ENCODE measurements at regions of chr4 and their contacts with region 1.

Region 1: GRCh38 chr4:105551965-105552746 is at the start of gene ARHGEF38:
- DNase-seq: peak; percentile 89
- ATAC-seq: peak; percentile 84
- H3K4me3 ChIP-seq: peak within 1 kb of the TSS; percentile 58
- H3K27ac ChIP-seq: peak within 1 kb of the TSS; percentile 99
- H3K4me1 ChIP-seq: peaks cover 52% of the 10 kb centered on the region
- H3K27me3 ChIP-seq: no peaks in the 10 kb centered on the region
- CTCF ChIP-seq: no peak
- total RNA-seq, gene ARHGEF38: 2.0 and 5.9 TPM in 2 replicates

Region 2: GRCh38 chr4:105509291-105509690 is 42.9 kb before region 1 on chr4:
- CTCF ChIA-PET with region 1: no interaction called
- POLR2A ChIA-PET with region 1: no interaction called
- intact Hi-C with region 1: loop called (anchors 5 kb)
- DNase-seq: no peak
- ATAC-seq: peak; percentile 15; the same call in 1 of the 2 replicates
- H3K4me3 ChIP-seq: no peak overlapping the region
- H3K27ac ChIP-seq: no peak overlapping the region
- H3K4me1 ChIP-seq: no peaks in the 10 kb centered on the region
- H3K27me3 ChIP-seq: no peaks in the 10 kb centered on the region
- CTCF ChIP-seq: no peak

Region 3: GRCh38 chr4:105520817-105521790 is 31.1 kb before region 1 on chr4:
- CTCF ChIA-PET with region 1: no interaction called
- POLR2A ChIA-PET with region 1: no interaction called
- intact Hi-C with region 1: loop called (anchors 2 kb)
- DNase-seq: peak; percentile 61
- ATAC-seq: peak; percentile 77
- H3K4me3 ChIP-seq: no peak overlapping the region
- H3K27ac ChIP-seq: no peak overlapping the region
- H3K4me1 ChIP-seq: no peaks in the 10 kb centered on the region
- H3K27me3 ChIP-seq: no peaks in the 10 kb centered on the region
- CTCF ChIP-seq: peak; percentile 78

Region 4: DNA sequence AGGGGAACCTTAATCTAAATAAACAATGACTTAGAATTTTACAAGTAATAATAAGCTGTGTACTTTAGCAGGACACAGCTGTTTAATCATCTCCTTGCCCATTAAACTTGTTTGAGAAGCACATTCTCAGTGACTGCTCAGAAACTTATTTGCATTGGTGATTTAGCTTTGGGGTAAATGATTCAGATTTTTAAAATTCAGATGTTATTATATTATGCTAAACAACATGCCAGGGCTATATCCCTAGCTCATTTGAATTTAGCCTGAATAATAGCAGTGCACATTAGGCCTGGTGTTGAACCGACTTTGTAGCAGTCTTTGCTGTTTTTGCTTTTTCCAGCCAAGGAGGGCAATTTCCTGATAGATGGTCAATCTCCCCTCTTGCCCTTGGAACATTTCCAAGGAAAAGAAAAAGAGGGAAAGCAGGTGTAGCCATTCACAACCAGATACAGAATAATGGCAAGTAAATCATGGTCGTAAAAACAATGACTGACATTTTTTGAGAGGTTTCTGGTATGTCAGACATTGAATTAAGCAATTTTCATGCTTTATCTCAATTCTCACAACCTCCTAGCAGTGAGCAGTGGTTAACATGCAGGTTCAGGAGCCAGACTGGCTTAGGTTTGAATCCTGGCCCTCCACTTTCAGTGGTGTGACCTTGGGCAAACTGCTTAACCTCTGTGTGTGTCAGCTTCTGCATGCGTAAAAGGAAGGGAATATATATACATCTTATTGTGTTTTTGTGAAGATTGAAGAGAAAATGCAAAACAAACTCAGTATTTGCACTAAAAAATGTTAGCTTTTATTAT is 17.1 kb after region 1 on chr4:
- CTCF ChIA-PET with region 1: no interaction called
- POLR2A ChIA-PET with region 1: no interaction called
- intact Hi-C with region 1: loop called (anchors 1 kb)
- DNase-seq: peak; percentile 77
- ATAC-seq: peak; percentile 96
- H3K4me3 ChIP-seq: no peak overlapping the region
- H3K27ac ChIP-seq: peak overlapping the region; percentile 75
- H3K4me1 ChIP-seq: peaks cover 15% of the 10 kb centered on the region
- H3K27me3 ChIP-seq: no peaks in the 10 kb centered on the region
- CTCF ChIP-seq: no peak

Region 5: DNA sequence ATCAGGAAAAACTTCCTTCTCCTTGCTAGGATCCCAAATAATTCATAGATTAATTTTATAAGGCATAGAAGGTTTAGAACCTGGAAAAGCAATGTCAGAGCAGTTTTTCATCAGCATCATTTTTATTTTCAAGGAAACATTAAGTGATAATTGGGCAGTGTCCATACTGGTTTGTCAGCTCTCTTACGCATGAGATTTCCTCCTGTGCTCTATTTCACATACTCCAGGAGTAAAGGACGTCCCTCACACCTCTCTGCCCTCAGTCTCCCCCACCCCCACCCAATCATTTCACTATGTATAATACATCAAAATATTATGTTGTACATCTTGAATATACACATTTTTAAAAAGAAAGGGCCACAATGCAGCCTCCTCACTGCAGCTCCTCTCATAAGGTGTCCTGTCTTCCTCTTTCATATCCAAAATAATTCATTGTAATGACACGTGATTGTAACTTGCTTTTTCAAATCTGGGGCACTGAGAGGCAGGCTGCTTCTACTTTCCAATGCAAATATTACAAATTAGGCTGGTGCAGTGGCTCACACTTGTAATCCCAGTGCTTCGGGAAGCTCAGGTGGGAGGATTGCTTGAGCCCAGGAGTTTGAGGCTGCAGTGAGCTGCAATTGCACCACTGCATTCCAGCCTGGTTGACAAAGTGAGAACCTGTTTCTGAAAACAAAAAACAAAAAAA is 34.6 kb after region 1 on chr4:
- CTCF ChIA-PET with region 1: no interaction called
- POLR2A ChIA-PET with region 1: no interaction called
- intact Hi-C with region 1: loop called (anchors 1 kb)
- DNase-seq: no peak
- ATAC-seq: 0 out of 2 replicates have a peak, but pooled peaks have one; percentile 17
- H3K4me3 ChIP-seq: peak overlapping the region; percentile 44
- H3K27ac ChIP-seq: peak overlapping the region; percentile 86
- H3K4me1 ChIP-seq: peaks cover 33% of the 10 kb centered on the region
- H3K27me3 ChIP-seq: no peaks in the 10 kb centered on the region
- CTCF ChIP-seq: no peak

Region 6: DNA sequence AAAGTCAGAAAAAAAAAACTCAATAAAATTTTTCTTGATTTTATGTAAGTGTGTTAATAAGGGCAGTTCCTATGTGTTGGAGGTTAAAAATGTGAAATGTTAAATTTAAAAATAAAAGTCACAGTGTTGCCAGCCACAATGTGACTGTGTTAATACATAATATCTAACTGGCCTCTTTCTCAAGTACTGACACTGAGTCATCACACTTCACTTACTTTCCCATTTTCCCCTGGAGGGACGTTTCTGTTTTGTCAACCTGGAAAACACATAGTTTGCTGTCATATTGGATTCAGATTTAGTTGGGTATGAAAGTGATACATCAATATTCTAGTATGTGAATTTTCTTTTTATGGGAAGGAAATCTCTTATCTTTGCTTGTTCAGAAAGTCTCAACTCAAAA is 46.6 kb after region 1 on chr4:
- CTCF ChIA-PET with region 1: no interaction called
- POLR2A ChIA-PET with region 1: no interaction called
- intact Hi-C with region 1: loop called (anchors 1 kb)
- DNase-seq: peak; percentile 62
- ATAC-seq: peak; percentile 39
- H3K4me3 ChIP-seq: no peak overlapping the region
- H3K27ac ChIP-seq: peak overlapping the region; percentile 85
- H3K4me1 ChIP-seq: peaks cover 50% of the 10 kb centered on the region
- H3K27me3 ChIP-seq: no peaks in the 10 kb centered on the region
- CTCF ChIP-seq: no peak

Region 7: GRCh38 chr4:105624530-105624929 is 72.4 kb after region 1 on chr4:
- CTCF ChIA-PET with region 1: no interaction called
- POLR2A ChIA-PET with region 1: no interaction called
- intact Hi-C with region 1: no loop called
- DNase-seq: no peak
- ATAC-seq: no peak
- H3K4me3 ChIP-seq: no peak overlapping the region
- H3K27ac ChIP-seq: no peak overlapping the region
- H3K4me1 ChIP-seq: peaks cover 10% of the 10 kb centered on the region
- H3K27me3 ChIP-seq: no peaks in the 10 kb centered on the region
- CTCF ChIP-seq: no peak

Region 8: DNA sequence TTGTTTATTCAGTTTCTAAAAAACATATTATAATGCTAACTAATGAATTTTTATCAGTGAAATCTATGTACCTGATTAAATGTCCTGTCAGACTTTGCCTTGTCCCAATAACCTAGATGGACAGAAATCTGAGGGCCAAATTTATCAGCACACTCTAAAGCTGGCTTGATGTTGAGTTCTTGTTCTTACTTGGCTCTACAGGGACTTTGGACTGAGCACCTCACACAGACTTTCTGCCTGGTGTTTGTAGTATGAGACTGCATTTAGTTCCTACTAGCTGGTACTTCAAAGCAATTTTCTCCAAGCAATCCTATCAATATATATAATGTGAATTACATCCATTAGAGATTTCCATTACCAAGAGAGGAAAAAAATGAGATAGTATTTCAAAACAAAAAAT is 118.5 kb after region 1 on chr4:
- CTCF ChIA-PET with region 1: no interaction called
- POLR2A ChIA-PET with region 1: no interaction called
- intact Hi-C with region 1: no loop called
- DNase-seq: no peak
- ATAC-seq: no peak
- H3K4me3 ChIP-seq: no peak overlapping the region
- H3K27ac ChIP-seq: no peak overlapping the region
- H3K4me1 ChIP-seq: peaks cover 12% of the 10 kb centered on the region
- H3K27me3 ChIP-seq: no peaks in the 10 kb centered on the region
- CTCF ChIP-seq: no peak

Region 9: DNA sequence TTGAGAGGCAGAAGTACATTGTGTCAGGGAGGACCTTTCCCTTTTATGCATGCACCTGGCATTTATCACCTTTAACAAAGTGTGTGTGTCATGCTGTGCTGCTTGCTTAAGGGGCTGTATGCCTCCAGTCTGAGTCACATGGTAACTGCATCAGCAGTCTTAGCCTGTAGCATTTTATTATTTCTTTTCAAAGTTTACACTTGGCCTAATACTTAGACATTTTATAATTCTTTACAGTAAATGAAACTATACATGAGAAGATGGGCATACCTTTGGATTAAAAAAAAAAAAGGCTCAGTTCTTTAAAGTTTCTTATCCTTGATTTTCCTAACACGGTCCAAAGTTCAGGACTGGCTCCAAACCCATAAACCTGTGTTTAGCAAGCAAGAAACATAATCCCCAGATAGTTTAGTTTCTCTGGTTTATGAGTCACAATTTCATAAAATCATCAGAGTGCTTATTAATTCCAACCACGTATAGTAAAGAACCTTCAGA is 357.7 kb after region 1 on chr4:
- CTCF ChIA-PET with region 1: no interaction called
- POLR2A ChIA-PET with region 1: no interaction called
- intact Hi-C with region 1: loop called (anchors 10 kb)
- DNase-seq: peak; percentile 87
- ATAC-seq: peak; percentile 99
- H3K4me3 ChIP-seq: peak overlapping the region; percentile 52; the same call in 1 of the 2 replicates
- H3K27ac ChIP-seq: peak overlapping the region; percentile 92
- H3K4me1 ChIP-seq: peaks cover 26% of the 10 kb centered on the region
- H3K27me3 ChIP-seq: no peaks in the 10 kb centered on the region
- CTCF ChIP-seq: no peak

Measured in PC-3 (cell line).